Stomach (tissue), 19 donors: ENCODE measurements at regions of chr3 and their contacts with region 1.

Region 1: GRCh38 chr3:32510075-32510724 is 7.5 kb upstream of the CMTM6 start:
- DNase-seq: peak; percentile 62 to 89
- H3K4me3 ChIP-seq: no peak overlapping the region
- H3K27ac ChIP-seq: no peak overlapping the region
- H3K4me1 ChIP-seq: peaks cover 0 to 17% (median 0%) of the 10 kb centered on the region in 4 donors
- H3K27me3 ChIP-seq: no peaks in the 10 kb centered on the region
- CTCF ChIP-seq: peak in 5 of 7 experiments; percentile 49 to 80 (median 64)
- EP300 ChIP-seq: no peak
- POLR2A ChIP-seq: no peak

Region 2: DNA sequence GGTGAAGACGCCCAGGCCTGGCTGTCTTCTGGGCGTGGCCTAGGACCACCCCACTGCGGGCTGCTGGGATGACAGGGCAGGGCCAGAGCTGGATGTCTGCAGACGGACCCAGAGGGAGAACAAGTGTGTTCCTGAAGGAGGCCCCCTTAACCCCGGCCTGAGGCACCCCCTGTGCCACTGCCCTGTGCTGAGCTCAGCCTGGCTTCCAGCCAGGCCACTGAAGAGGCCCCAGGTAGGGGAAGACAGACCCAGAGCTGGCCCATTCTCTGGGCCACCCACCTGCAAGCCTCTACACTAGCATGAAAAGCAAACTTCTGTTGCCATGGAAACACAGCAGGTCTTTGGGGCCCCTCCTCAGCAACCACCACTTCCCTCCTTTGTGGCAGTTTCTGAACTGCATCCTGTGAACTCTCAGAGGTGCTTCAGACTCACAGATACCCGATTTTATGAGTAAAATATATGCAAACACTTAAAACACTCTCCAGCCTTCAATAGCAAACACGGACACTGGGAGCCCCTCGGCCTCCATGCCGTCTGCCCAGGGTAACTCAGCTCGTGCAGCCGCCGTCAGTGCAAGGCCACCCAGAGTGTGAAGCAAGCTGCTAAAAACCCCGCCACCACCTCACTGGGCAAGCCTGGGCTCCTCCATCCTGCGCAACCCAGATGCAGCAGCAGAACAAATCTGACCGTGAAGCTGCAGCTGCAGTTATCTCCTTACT is 50.0 kb before region 1 on chr3:
- intact Hi-C with region 1: no loop called
- DNase-seq: peak in 1 of 2 donors; percentile 82
- H3K4me3 ChIP-seq: no peak overlapping the region
- H3K27ac ChIP-seq: peak overlapping the region in 3 of 5 donors; percentile 15 to 60 (median 32)
- H3K4me1 ChIP-seq: peaks cover 6 to 51% (median 13%) of the 10 kb centered on the region in 4 donors
- H3K27me3 ChIP-seq: no peaks in the 10 kb centered on the region
- CTCF ChIP-seq: no peak
- EP300 ChIP-seq: no peak
- POLR2A ChIP-seq: no peak

Region 3: DNA sequence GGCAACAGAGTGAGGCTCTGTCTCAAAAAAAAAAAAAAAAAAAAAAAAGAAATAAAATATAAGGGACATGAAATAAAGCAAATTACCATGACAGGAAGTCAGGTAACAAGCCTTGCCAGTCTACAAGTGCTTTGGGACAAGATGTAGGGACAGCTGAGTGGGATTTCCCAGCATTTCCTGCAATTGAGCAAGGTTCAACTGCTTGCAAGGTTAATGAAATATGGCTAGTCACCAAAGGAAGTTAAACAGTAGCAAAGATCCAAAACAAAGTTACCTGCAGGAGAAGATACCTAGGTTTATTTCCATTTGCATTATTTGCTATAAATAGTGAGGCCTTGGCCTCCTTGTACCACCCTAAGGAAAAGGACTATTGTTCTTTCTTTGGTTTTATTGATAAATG is 152.4 kb after region 1 on chr3:
- intact Hi-C with region 1: loop called (anchors 5 kb)
- DNase-seq: no peak
- H3K4me3 ChIP-seq: no peak overlapping the region
- H3K27ac ChIP-seq: no peak overlapping the region
- H3K4me1 ChIP-seq: no peaks in the 10 kb centered on the region
- H3K27me3 ChIP-seq: peaks cover 0 to 15% (median 0%) of the 10 kb centered on the region in 3 donors
- CTCF ChIP-seq: no peak
- EP300 ChIP-seq: no peak
- POLR2A ChIP-seq: no peak